H1 (cell line): ENCODE measurements at regions of chr1 and their contacts with region 1.

Region 1: GRCh38 chr1:69686367-69686984 is 118.8 kb downstream of the LRRC7 start:
- DNase-seq: no peak
- H3K4me3 ChIP-seq: no peak overlapping the region
- H3K27ac ChIP-seq: no peak overlapping the region
- H3K4me1 ChIP-seq: peaks cover 0 to 4% (median 0%) of the 10 kb centered on the region in 4 experiments; a peak in 2 of 7 replicates
- H3K27me3 ChIP-seq: no peaks in the 10 kb centered on the region
- CTCF ChIP-seq: no peak
- EP300 ChIP-seq: no peak
- POLR2A ChIP-seq: no peak
- RAD21 ChIP-seq: no peak

Region 2: GRCh38 chr1:69700770-69701169 is 14.3 kb after region 1 on chr1:
- CTCF ChIA-PET with region 1: interaction called, 34 read pairs
- POLR2A ChIA-PET with region 1: no interaction called
- DNase-seq: peak; percentile 2 to 58
- H3K4me3 ChIP-seq: no peak overlapping the region
- H3K27ac ChIP-seq: no peak overlapping the region
- H3K4me1 ChIP-seq: no peaks in the 10 kb centered on the region
- H3K27me3 ChIP-seq: no peaks in the 10 kb centered on the region
- CTCF ChIP-seq: peak; percentile 61 to 74 (median 67)
- EP300 ChIP-seq: no peak
- POLR2A ChIP-seq: no peak
- RAD21 ChIP-seq: peak; percentile 83 to 84